ENCODE measurements at regions of chr1 and their contacts with region 1.

Region 1: DNA sequence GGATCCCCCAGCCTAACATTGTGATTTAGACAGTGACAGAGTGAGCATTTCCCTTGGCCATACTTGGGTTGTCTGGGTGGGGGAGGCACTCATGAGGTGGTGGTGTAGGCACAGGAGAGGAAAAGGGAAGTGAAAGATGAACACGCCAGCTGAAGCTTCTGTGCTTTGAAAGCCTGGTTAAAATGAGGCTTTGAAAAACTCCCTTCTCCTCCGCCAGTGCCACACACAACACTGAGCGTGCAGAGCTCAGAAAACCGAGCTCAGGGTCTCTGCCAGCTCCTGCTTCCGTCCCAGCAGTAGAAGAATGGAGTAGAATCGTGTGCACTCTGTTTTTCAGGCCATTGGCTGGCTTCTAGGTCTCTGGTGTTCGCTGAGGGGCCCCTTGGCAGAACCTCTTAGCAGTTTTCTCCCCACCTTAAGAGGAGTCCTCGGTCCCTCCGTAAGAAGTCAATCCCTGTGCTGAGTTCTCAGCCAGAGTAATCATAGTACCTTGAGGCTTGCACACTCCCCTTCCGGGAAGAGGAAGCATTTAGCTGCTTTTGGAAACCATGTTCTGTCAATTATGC is 12.9 kb downstream of the PLEKHM2 start:
- DNase-seq: peak; percentile 60
- ATAC-seq: peak; percentile 92
- H3K4me3 Mint-ChIP-seq: peak overlapping the region; percentile 81
- H3K27ac Mint-ChIP-seq: peak overlapping the region; percentile 97
- H3K4me1 Mint-ChIP-seq: peaks cover 75% of the 10 kb centered on the region
- H3K27me3 Mint-ChIP-seq: no peaks in the 10 kb centered on the region
- CTCF ChIP-seq: no peak

Region 2: DNA sequence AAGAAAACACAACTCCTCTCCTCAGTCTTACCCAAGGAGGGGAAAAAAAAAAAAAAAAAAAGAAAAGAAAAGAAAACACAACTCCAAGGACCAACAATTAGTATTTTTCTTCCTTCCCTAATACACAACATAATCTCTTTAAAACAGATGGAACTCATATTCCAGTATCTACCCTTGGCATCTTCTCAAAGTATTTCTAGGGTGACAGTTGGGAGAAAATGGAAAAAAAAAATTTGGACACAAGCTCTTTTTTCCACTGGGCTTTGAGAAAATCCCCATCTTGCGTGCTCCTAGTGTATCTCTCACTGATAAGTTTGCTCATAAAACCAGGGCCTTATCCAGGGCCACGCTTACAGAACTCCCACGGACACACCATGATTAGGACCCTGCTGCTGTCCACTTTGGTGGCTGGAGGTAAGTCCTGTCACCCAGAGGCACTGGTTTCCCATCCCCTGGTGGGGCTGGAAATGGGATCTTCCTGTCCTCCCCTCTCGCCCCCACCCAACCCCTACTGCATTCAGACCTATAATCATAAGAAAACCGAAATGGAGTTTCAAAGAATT is 221.2 kb before region 1 on chr1 and contains the start of gene CELA2B:
- CTCF ChIA-PET with region 1: no interaction called
- POLR2A ChIA-PET with region 1: no interaction called
- intact Hi-C with region 1: no loop called
- DNase-seq: no peak
- ATAC-seq: no peak
- H3K4me3 Mint-ChIP-seq: no peak within 1 kb of the TSS
- H3K27ac Mint-ChIP-seq: no peak within 1 kb of the TSS
- H3K4me1 Mint-ChIP-seq: no peaks in the 10 kb centered on the region
- H3K27me3 Mint-ChIP-seq: no peaks in the 10 kb centered on the region
- CTCF ChIP-seq: no peak
- total RNA-seq, gene CELA2B: not detected in 2 replicates

Region 3: GRCh38 chr1:15603050-15603965 is 93.7 kb before region 1 on chr1:
- CTCF ChIA-PET with region 1: no interaction called
- POLR2A ChIA-PET with region 1: interaction called, 9 read pairs
- intact Hi-C with region 1: loop called (anchors 5 kb)
- DNase-seq: peak; percentile 87
- ATAC-seq: peak; percentile 94
- H3K4me3 Mint-ChIP-seq: peak overlapping the region; percentile 85
- H3K27ac Mint-ChIP-seq: peak overlapping the region; percentile 81
- H3K4me1 Mint-ChIP-seq: peaks cover 14% of the 10 kb centered on the region
- H3K27me3 Mint-ChIP-seq: no peaks in the 10 kb centered on the region
- CTCF ChIP-seq: no peak

Region 4: GRCh38 chr1:15650433-15650832 is 46.6 kb before region 1 on chr1:
- CTCF ChIA-PET with region 1: no interaction called
- POLR2A ChIA-PET with region 1: interaction called, 4 read pairs
- intact Hi-C with region 1: loop called (anchors 1 kb)
- DNase-seq: no peak
- ATAC-seq: peak; percentile 85
- H3K4me3 Mint-ChIP-seq: no peak overlapping the region
- H3K27ac Mint-ChIP-seq: peak overlapping the region; percentile 76
- H3K4me1 Mint-ChIP-seq: peaks cover 6% of the 10 kb centered on the region
- H3K27me3 Mint-ChIP-seq: no peaks in the 10 kb centered on the region
- CTCF ChIP-seq: no peak

Region 5: DNA sequence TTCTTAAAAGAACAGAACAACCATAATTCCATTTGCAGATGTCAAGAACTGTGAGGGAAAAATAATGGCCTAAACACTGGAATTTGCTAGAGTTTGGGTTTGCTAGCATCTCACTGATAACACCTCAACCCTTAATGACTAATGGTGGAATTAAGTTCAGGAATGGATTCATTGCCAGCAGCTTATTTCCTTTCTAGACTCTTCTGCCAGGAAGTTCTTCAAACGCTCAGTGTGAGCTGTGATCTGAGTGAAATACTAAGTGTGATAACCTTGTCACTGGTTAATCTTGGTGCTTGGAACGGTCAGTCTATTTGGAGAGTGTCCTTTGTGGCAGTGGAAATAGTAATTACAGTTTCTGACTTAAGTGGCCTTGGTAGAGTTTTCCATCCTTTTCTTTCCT is 34.6 kb before region 1 on chr1:
- CTCF ChIA-PET with region 1: no interaction called
- POLR2A ChIA-PET with region 1: interaction called, 3 read pairs
- intact Hi-C with region 1: loop called (anchors 5 kb)
- DNase-seq: no peak
- ATAC-seq: no peak
- H3K4me3 Mint-ChIP-seq: no peak overlapping the region
- H3K27ac Mint-ChIP-seq: no peak overlapping the region
- H3K4me1 Mint-ChIP-seq: peaks cover 3% of the 10 kb centered on the region
- H3K27me3 Mint-ChIP-seq: no peaks in the 10 kb centered on the region
- CTCF ChIP-seq: no peak

Region 6: GRCh38 chr1:15684468-15685291 is 12.4 kb before region 1 on chr1:
- CTCF ChIA-PET with region 1: interaction called, 7 read pairs
- POLR2A ChIA-PET with region 1: interaction called, 80 read pairs
- intact Hi-C with region 1: loop called (anchors 1 kb)
- DNase-seq: peak; percentile 46
- ATAC-seq: peak; percentile 6
- H3K4me3 Mint-ChIP-seq: peak overlapping the region; percentile 88
- H3K27ac Mint-ChIP-seq: peak overlapping the region; percentile 81
- H3K4me1 Mint-ChIP-seq: peaks cover 70% of the 10 kb centered on the region
- H3K27me3 Mint-ChIP-seq: no peaks in the 10 kb centered on the region
- CTCF ChIP-seq: no peak

Region 7: DNA sequence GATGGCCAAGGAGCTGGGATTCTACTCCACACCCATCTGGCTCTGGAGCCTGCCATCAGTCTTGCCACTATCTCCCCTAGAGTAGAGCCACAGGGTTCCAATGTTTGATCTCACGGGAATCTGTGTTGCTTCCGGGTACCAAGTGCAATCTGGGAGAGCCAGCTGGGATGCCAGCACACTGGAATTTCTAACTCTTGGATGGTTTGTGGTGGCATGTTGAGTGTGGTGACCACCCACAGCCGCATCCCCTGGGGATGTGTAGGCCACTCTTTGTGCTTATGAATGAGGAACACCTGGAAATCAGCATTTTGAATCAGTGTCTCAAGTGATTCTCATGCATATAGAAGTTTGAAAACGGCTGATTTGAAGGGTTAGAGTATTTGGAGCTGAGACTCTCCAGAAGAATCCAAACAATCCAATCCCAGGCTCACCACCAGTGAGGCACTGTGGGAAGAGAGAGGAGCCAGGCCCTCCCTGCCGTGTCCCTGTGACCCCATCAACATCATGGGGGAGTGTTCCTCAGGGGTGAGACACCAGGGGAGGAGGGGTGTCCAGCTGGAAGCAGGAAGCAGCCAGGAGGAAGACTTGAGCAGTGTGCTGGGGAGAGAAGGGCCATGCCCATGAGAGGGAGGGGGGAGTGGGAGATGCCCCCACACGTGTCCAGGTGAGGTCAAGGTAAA is 74.9 kb after region 1 on chr1:
- CTCF ChIA-PET with region 1: no interaction called
- POLR2A ChIA-PET with region 1: no interaction called
- intact Hi-C with region 1: no loop called
- DNase-seq: no peak
- ATAC-seq: no peak
- H3K4me3 Mint-ChIP-seq: no peak overlapping the region
- H3K27ac Mint-ChIP-seq: no peak overlapping the region
- H3K4me1 Mint-ChIP-seq: no peaks in the 10 kb centered on the region
- H3K27me3 Mint-ChIP-seq: peaks cover 22% of the 10 kb centered on the region
- CTCF ChIP-seq: no peak

Region 8: DNA sequence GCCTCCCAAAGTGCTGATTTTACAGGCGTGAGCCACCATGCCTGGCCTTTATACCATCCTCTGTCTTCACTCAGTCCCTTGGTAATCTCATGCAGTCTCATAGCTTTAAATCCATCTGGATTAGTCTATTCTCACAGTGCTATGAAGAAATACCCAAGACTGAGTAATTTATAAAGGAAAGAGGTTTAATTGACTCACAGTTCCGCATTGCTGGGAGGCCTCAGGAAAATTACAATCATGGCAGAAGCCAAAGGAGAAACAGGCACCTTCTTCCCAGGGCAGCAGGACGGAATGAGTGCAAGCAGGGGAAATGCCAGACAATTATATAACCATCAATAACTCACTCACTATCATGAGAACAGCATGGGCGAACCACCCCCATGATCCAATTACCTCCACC is 589.1 kb after region 1 on chr1:
- CTCF ChIA-PET with region 1: no interaction called
- POLR2A ChIA-PET with region 1: no interaction called
- intact Hi-C with region 1: no loop called
- DNase-seq: no peak
- ATAC-seq: no peak
- H3K4me3 Mint-ChIP-seq: no peak overlapping the region
- H3K27ac Mint-ChIP-seq: no peak overlapping the region
- H3K4me1 Mint-ChIP-seq: no peaks in the 10 kb centered on the region
- H3K27me3 Mint-ChIP-seq: no peaks in the 10 kb centered on the region
- CTCF ChIP-seq: no peak

Measured in activated B cell treated with CpG ODN at 0.5 μM for 24 hours (primary cell).